ENCODE measurements at regions of chr6 and their contacts with region 1.

Region 1: GRCh38 chr6:25369433-25370181 is 90.4 kb downstream of the CARMIL1 start:
- DNase-seq: peak in 6 of 14 experiments; percentile 3 to 53 (median 26)
- ATAC-seq: peak; percentile 28
- H3K4me3 ChIP-seq: peak overlapping the region; percentile 34
- H3K4me3 Mint-ChIP-seq: peak overlapping the region; percentile 76
- H3K27ac ChIP-seq: peak overlapping the region; percentile 42 to 62
- H3K27ac Mint-ChIP-seq: peak overlapping the region; percentile 97
- H3K4me1 ChIP-seq: peaks cover 35% of the 10 kb centered on the region
- H3K4me1 Mint-ChIP-seq: peaks cover 70% of the 10 kb centered on the region
- H3K27me3 ChIP-seq: no peaks in the 10 kb centered on the region
- H3K27me3 Mint-ChIP-seq: no peaks in the 10 kb centered on the region
- CTCF ChIP-seq: no peak

Region 2: DNA sequence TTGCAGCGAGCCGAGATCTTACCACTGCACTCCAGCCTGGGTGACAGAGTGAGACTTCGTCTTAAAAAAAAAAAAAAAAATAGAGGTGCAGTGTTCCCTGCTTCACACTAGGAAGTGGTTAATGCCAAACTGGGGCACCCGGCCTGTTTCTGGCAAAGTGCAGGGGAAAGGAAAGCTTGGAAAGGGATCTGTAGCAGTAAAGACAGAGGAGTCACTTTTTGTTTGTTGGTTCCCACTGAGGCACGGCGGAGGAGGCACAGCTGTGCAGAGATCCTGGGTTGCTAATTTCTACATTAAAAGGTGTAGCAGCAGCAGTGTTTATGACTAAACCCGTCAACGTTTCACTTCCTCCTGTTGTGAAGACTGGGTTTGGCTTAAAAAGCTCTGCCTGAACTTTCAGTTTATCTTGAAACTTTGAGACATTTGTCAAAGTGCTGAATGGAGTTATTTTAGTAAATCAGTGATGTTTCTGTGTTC is 35.1 kb after region 1 on chr6:
- CTCF ChIA-PET with region 1: interaction called, 4 read pairs
- POLR2A ChIA-PET with region 1: interaction called, 66 read pairs
- intact Hi-C with region 1: loop called in 1 of 2 experiments (anchors 2 kb)
- DNase-seq: peak; percentile 3 to 66 (median 23)
- ATAC-seq: peak; percentile 85
- H3K4me3 ChIP-seq: peak overlapping the region; percentile 50
- H3K4me3 Mint-ChIP-seq: no peak overlapping the region
- H3K27ac ChIP-seq: peak overlapping the region; percentile 70 to 72
- H3K27ac Mint-ChIP-seq: no peak overlapping the region
- H3K4me1 ChIP-seq: peaks cover 47% of the 10 kb centered on the region
- H3K4me1 Mint-ChIP-seq: no peaks in the 10 kb centered on the region
- H3K27me3 ChIP-seq: no peaks in the 10 kb centered on the region
- H3K27me3 Mint-ChIP-seq: no peaks in the 10 kb centered on the region
- CTCF ChIP-seq: no peak

Region 3: GRCh38 chr6:25441663-25442270 is 72.2 kb after region 1 on chr6:
- CTCF ChIA-PET with region 1: no interaction called
- POLR2A ChIA-PET with region 1: interaction called, 9 read pairs
- intact Hi-C with region 1: loop called in 1 of 2 experiments (anchors 5 kb)
- DNase-seq: peak in 4 of 14 experiments; percentile 13 to 55 (median 32)
- ATAC-seq: peak; percentile 92
- H3K4me3 ChIP-seq: no peak overlapping the region
- H3K4me3 Mint-ChIP-seq: no peak overlapping the region
- H3K27ac ChIP-seq: peak overlapping the region; percentile 49 to 61
- H3K27ac Mint-ChIP-seq: no peak overlapping the region
- H3K4me1 ChIP-seq: peaks cover 5% of the 10 kb centered on the region
- H3K4me1 Mint-ChIP-seq: peaks cover 27% of the 10 kb centered on the region
- H3K27me3 ChIP-seq: no peaks in the 10 kb centered on the region
- H3K27me3 Mint-ChIP-seq: no peaks in the 10 kb centered on the region
- CTCF ChIP-seq: no peak

Region 4: DNA sequence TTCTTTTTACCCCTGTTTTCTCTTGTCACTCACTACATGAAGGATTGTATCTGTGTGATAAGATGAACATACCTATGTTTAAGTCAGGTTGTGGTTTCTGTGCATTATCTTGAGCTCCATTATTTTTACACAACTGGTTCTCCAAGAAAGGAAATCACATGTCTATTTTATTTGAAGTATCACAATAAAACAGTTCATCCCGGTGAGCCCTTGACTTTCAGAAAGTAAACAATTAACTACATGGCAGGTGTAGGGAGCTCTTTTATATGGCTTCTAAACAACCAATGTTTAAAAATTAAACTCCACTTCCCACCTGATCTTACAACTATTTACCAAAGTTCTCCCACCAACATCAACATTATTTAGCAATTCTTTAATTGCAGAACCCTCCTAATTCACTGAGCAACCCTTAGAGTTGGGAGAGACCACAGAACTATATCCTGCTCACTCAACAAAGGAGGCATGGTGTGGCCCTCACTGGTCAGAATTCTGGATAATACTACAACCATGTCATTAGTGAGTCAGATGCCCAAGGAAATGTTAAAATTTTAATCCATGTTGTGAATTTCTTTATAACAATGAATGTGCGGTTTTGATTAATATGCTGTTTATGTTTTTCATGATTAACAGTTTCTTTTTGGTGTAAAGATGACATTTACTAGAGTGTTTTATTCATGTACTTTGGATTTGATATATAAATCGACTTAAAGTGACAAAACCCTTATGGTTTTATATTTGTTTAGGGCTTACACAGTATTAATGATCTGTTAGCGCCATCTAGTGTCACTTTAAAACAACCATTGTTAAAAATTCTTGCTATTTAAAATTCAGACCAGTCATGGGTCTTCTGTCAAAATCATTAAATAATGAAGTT is 232.4 kb after region 1 on chr6:
- CTCF ChIA-PET with region 1: no interaction called
- POLR2A ChIA-PET with region 1: no interaction called
- intact Hi-C with region 1: no loop called
- DNase-seq: peak in 3 of 14 experiments; percentile 55 to 75 (median 69)
- ATAC-seq: no peak
- H3K4me3 ChIP-seq: no peak overlapping the region
- H3K4me3 Mint-ChIP-seq: no peak overlapping the region
- H3K27ac ChIP-seq: no peak overlapping the region
- H3K27ac Mint-ChIP-seq: no peak overlapping the region
- H3K4me1 ChIP-seq: no peaks in the 10 kb centered on the region
- H3K4me1 Mint-ChIP-seq: peaks cover 5% of the 10 kb centered on the region
- H3K27me3 ChIP-seq: no peaks in the 10 kb centered on the region
- H3K27me3 Mint-ChIP-seq: no peaks in the 10 kb centered on the region
- CTCF ChIP-seq: peak; percentile 81

Measured in CD4-positive, alpha-beta T cell (primary cell).